Activated naive CD4-positive, alpha-beta T cell treated with anti-CD3 and anti-CD28 coated beads for 36 hours (primary cell): ENCODE measurements at regions of chr18 and their contacts with region 1.

Region 1: DNA sequence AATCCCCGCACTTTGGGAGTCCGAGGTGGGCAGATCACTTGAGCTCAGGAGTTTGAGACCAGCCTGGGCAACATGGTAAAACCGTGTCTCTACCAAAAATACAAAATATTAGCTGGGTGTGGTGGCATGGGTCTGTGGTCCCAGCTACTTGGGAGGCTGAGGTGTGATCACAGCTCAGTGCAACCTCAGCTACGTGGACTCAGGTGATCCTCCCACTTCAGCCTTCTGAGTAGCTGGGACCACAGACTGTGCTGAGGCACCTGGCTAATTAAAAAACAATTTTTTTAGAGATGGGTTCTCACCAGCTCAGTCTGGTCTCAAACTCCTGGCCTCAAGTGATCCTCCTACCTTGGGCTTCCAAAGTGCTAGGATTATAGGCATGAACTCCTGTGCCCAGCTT is 23.4 kb downstream of the ANKRD12 start:
- DNase-seq: no peak
- H3K4me3 Mint-ChIP-seq: no peak overlapping the region
- H3K27ac Mint-ChIP-seq: no peak overlapping the region
- H3K4me1 Mint-ChIP-seq: peaks cover 51% of the 10 kb centered on the region
- H3K27me3 Mint-ChIP-seq: no peaks in the 10 kb centered on the region

Region 2: DNA sequence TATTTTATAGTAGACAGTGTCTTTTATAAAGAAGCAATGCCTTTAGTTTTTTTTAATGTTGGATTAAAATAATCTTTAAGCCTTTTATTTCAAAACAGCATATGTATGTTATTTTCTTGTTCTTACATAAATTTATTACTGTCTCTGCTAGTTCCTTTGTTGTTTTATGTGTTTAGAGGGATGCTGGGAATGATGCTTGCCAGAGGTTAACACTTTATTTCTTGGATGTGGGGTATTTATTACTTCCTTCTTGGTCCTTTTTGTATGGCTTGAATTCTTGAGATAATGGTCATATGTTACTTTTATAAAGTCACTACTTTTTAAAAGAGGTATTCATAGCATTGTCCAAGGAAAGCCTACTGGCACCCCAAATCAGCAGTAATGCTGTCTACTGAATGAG is 39.7 kb after region 1 on chr18:
- CTCF ChIA-PET with region 1: no interaction called
- intact Hi-C with region 1: no loop called
- DNase-seq: no peak
- H3K4me3 Mint-ChIP-seq: no peak overlapping the region
- H3K27ac Mint-ChIP-seq: no peak overlapping the region
- H3K4me1 Mint-ChIP-seq: peaks cover 3% of the 10 kb centered on the region
- H3K27me3 Mint-ChIP-seq: no peaks in the 10 kb centered on the region

Region 3: GRCh38 chr18:9221040-9221439 is 61.0 kb after region 1 on chr18:
- CTCF ChIA-PET with region 1: no interaction called
- intact Hi-C with region 1: loop called (anchors 10 kb)
- DNase-seq: no peak
- H3K4me3 Mint-ChIP-seq: no peak overlapping the region
- H3K27ac Mint-ChIP-seq: no peak overlapping the region
- H3K4me1 Mint-ChIP-seq: no peaks in the 10 kb centered on the region
- H3K27me3 Mint-ChIP-seq: no peaks in the 10 kb centered on the region